ENCODE measurements at regions of chr19 and their contacts with region 1.

Region 1: GRCh38 chr19:29539670-29540069 is 13.9 kb downstream of the VSTM2B start:
- DNase-seq: no peak
- H3K4me3 ChIP-seq: no peak overlapping the region
- H3K27ac ChIP-seq: no peak overlapping the region
- H3K4me1 ChIP-seq: no peaks in the 10 kb centered on the region
- H3K27me3 ChIP-seq: no peaks in the 10 kb centered on the region
- CTCF ChIP-seq: no peak

Region 2: GRCh38 chr19:29590278-29590677 is 50.6 kb after region 1 on chr19:
- CTCF ChIA-PET with region 1: no interaction called
- dilution Hi-C with region 1: loop called (anchors 5 kb)
- in situ Hi-C with region 1: no loop called
- intact Hi-C with region 1: no loop called
- DNase-seq: no peak
- H3K4me3 ChIP-seq: no peak overlapping the region
- H3K27ac ChIP-seq: no peak overlapping the region
- H3K4me1 ChIP-seq: no peaks in the 10 kb centered on the region
- H3K27me3 ChIP-seq: peaks cover 3% of the 10 kb centered on the region
- CTCF ChIP-seq: no peak

Measured in mammary epithelial cell (primary cell).